ENCODE measurements at regions of chr14 and their contacts with region 1.

Region 1: GRCh38 chr14:31194095-31194494 is 13.5 kb downstream of the HECTD1 start:
- DNase-seq: no peak
- H3K4me3 ChIP-seq: no peak overlapping the region
- H3K27me3 ChIP-seq: no peaks in the 10 kb centered on the region
- CTCF ChIP-seq: no peak

Region 2: GRCh38 chr14:30770376-30770775 is 423.7 kb before region 1 on chr14:
- CTCF ChIA-PET with region 1: no interaction called
- POLR2A ChIA-PET with region 1: no interaction called
- DNase-seq: no peak
- H3K4me3 ChIP-seq: no peak overlapping the region
- H3K27me3 ChIP-seq: peaks cover 5% of the 10 kb centered on the region
- CTCF ChIP-seq: no peak

Region 3: GRCh38 chr14:31174433-31174832 is 19.7 kb before region 1 on chr14:
- CTCF ChIA-PET with region 1: interaction called, 3 read pairs
- POLR2A ChIA-PET with region 1: interaction called, 10 read pairs
- DNase-seq: no peak
- H3K4me3 ChIP-seq: no peak overlapping the region
- H3K27me3 ChIP-seq: no peaks in the 10 kb centered on the region
- CTCF ChIP-seq: no peak

Region 4: GRCh38 chr14:31228533-31228932 is 34.4 kb after region 1 on chr14:
- CTCF ChIA-PET with region 1: no interaction called
- POLR2A ChIA-PET with region 1: no interaction called
- DNase-seq: no peak
- H3K4me3 ChIP-seq: no peak overlapping the region
- H3K27me3 ChIP-seq: no peaks in the 10 kb centered on the region
- CTCF ChIP-seq: no peak

Region 5: GRCh38 chr14:31501870-31502269 is 307.8 kb after region 1 on chr14:
- CTCF ChIA-PET with region 1: no interaction called
- POLR2A ChIA-PET with region 1: no interaction called
- DNase-seq: no peak
- H3K4me3 ChIP-seq: no peak overlapping the region
- H3K27me3 ChIP-seq: no peaks in the 10 kb centered on the region
- CTCF ChIP-seq: no peak

Region 6: DNA sequence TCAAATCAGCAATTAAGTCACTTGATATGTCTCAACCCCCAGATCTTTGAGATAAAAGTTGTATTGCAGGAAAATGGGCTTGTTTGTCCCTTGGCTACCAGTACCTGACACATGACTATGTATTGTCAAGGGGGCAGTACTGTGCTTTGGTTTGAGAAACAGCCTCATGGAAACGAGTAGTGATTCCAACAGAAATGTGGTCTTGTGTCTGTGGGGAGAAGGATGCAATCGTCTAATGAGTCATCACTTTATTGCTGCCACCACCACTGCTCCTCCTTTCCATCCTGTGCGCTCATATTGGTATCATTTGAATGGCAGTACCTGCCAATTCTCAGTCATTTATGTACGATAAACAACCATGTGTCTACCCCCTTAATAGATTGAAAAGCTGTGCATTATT is 810.2 kb after region 1 on chr14:
- CTCF ChIA-PET with region 1: no interaction called
- POLR2A ChIA-PET with region 1: no interaction called
- DNase-seq: peak; percentile 20
- H3K4me3 ChIP-seq: no peak overlapping the region
- H3K27me3 ChIP-seq: peaks cover 18% of the 10 kb centered on the region
- CTCF ChIP-seq: no peak